Prostate gland (tissue), 2 donors: ENCODE measurements at regions of chr9 and their contacts with region 1.

Region 1: GRCh38 chr9:107239474-107239873 is 43.6 kb upstream of the RAD23B start:
- DNase-seq: no peak
- H3K4me3 ChIP-seq: no peak overlapping the region
- H3K27ac ChIP-seq: no peak overlapping the region
- H3K4me1 ChIP-seq: no peaks in the 10 kb centered on the region
- H3K27me3 ChIP-seq: no peaks in the 10 kb centered on the region
- CTCF ChIP-seq: peak in 2 of 4 experiments; percentile 33 to 40
- POLR2A ChIP-seq: no peak

Region 2: GRCh38 chr9:106535439-106535838 is 704.0 kb before region 1 on chr9:
- intact Hi-C with region 1: no loop called
- DNase-seq: no peak
- H3K4me3 ChIP-seq: no peak overlapping the region
- H3K27ac ChIP-seq: no peak overlapping the region
- H3K4me1 ChIP-seq: no peaks in the 10 kb centered on the region
- H3K27me3 ChIP-seq: no peaks in the 10 kb centered on the region
- CTCF ChIP-seq: no peak
- POLR2A ChIP-seq: no peak

Region 3: GRCh38 chr9:107340920-107341632 is 101.6 kb after region 1 on chr9:
- intact Hi-C with region 1: loop called (anchors 2 kb)
- DNase-seq: peak; percentile 74
- H3K4me3 ChIP-seq: no peak overlapping the region
- H3K27ac ChIP-seq: no peak overlapping the region
- H3K4me1 ChIP-seq: peaks cover 6% of the 10 kb centered on the region
- H3K27me3 ChIP-seq: no peaks in the 10 kb centered on the region
- CTCF ChIP-seq: peak; percentile 78 to 90 (median 82)
- POLR2A ChIP-seq: no peak

Region 4: DNA sequence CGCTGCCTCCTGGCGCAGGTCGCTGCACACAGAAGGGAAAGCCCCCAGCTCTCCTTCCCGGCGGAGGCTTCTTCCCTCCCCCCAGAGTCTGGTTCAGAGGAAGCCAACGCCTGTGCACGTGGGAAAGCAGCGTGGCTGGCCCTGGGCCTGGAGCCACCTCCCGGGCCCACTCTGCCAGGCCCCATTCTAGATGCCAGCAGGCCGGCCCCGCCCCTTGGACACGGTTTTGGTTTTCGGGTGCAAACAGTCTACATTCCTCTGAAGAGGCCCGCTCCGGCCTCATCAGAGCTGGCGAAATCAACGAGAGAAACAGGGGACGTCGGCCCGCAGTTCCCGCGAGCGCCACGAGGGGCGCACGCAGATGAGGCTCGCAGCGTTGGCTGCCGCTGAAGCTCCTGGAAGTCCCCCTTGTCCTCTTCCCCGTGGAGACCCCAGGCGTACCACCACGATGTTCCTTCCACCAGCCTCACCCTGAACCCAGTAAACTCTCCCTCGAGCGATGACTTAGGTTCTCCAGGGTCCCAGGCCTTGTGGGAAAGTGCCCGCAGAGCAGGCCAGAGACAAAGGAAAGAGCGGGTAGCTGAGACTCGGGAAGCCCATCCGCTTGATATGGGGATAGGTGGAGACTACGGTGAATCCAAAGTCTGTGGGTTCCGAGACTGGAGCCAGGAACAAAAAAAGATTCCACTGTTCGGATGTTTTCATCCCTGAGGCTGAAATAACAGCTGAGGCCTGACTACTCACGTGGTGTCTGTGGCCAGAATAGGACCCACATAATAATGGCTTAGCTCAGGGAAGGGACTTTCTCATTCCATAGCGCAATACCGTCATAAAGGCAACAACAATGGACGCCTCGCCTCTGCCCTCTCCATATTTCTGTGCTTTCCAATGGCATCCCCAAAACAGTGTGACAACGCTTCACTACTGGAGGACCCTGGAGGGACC is 185.9 kb after region 1 on chr9:
- intact Hi-C with region 1: loop called (anchors 10 kb)
- DNase-seq: peak; percentile 95
- H3K4me3 ChIP-seq: no peak overlapping the region
- H3K27ac ChIP-seq: peak overlapping the region; percentile 78 to 81
- H3K4me1 ChIP-seq: no peaks in the 10 kb centered on the region
- H3K27me3 ChIP-seq: no peaks in the 10 kb centered on the region
- CTCF ChIP-seq: peak; percentile 84 to 95 (median 90)
- POLR2A ChIP-seq: peak; percentile 23